ENCODE measurements at regions of chr16 and their contacts with region 1.

Region 1: DNA sequence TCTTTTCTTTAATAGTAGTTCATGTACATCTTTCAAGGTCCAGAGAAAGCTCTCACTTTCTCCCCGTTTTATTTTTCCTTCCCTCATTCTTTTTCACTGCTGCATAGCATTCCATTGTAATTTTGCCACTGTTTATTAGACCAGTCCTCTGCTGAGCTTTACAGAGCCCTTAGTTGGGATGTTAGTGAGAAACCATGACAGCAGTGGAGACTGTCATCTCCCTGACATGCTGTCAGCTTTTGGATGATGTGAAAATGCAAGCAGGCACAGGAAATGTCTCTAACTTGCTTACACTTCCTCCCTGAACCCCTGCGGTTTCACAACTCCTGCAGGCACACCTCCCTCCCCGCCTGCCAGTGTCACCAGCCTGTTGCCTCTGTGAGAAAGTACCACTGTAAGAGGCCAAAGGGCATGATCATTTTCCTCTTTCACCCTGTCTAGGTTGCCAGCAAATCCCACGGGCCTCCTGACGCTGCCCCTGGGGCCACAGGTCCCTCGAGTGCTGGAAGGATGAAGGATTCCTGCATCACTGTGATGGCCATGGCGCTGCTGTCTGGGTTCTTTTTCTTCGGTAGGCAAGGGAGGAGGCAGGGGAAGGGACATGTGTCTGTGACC is at the start of gene ITGAL:
- DNase-seq: no peak
- H3K4me3 ChIP-seq: no peak within 1 kb of the TSS
- H3K27ac ChIP-seq: no peak within 1 kb of the TSS
- H3K27me3 ChIP-seq: peaks cover 45% of the 10 kb centered on the region
- CTCF ChIP-seq: no peak
- polyA plus RNA-seq, gene ITGAL: not detected in 2 replicates

Region 2: GRCh38 chr16:30458561-30459394 is 13.7 kb before region 1 on chr16:
- CTCF ChIA-PET with region 1: no interaction called
- POLR2A ChIA-PET with region 1: interaction called, 10 read pairs
- DNase-seq: no peak
- H3K4me3 ChIP-seq: no peak overlapping the region
- H3K27ac ChIP-seq: no peak overlapping the region
- H3K27me3 ChIP-seq: peaks cover 18% of the 10 kb centered on the region
- CTCF ChIP-seq: no peak

Region 3: GRCh38 chr16:30657866-30658730 is 185.7 kb after region 1 on chr16 and contains the start of gene FBRS:
- CTCF ChIA-PET with region 1: no interaction called
- POLR2A ChIA-PET with region 1: no interaction called
- DNase-seq: peak; percentile 100
- H3K4me3 ChIP-seq: peak within 1 kb of the TSS; percentile 95
- H3K27ac ChIP-seq: peak within 1 kb of the TSS; percentile 100
- H3K27me3 ChIP-seq: no peaks in the 10 kb centered on the region
- CTCF ChIP-seq: peak; percentile 73
- polyA plus RNA-seq, gene FBRS: 5.0 and 9.0 TPM in 2 replicates